ENCODE measurements at regions of chr1 and their contacts with region 1.

Region 1: DNA sequence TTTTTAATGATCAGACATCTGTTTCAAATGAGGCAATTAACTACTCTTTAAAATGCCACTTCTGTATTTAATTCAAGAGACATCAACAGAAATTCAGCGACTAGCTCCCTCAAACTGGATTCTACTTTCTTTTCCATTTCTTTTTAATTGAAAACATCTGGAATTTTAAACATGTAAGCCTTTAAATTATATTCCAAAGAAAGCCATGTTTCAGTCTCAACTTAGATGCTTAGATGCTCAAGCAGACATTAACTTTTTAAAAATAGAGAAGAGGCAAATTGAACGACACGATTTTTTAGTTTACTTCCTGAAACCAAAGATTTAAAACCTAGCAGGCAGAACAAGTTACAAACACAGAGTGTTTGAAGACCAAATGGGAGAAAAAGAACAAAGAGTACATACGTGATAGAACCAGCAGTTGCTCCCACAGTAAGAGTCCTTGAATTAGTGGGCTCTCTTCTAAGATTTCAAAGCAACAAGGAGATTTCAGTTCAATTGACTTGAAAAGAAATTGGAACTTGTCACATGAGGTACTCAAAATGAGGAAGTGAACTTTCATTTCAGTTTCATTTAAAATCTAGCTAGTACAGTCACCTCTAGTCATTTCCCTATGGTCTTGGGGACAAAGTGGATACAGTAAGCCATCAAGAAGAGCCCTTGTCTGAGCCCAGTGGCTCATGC is at the start of gene CTSS:
- DNase-seq: peak; percentile 88
- ATAC-seq: peak; percentile 90
- H3K4me3 ChIP-seq: peak within 1 kb of the TSS; percentile 77
- H3K27ac ChIP-seq: peak within 1 kb of the TSS; percentile 96
- H3K4me1 ChIP-seq: peaks cover 9% of the 10 kb centered on the region
- H3K27me3 ChIP-seq: no peaks in the 10 kb centered on the region
- CTCF ChIP-seq: no peak
- EP300 ChIP-seq: no peak; a peak in 1 of 4 replicates
- POLR2A ChIP-seq: no peak
- RAD21 ChIP-seq: no peak
- polyA plus RNA-seq, gene CTSS: 68.6 to 84.8 TPM

Region 2: DNA sequence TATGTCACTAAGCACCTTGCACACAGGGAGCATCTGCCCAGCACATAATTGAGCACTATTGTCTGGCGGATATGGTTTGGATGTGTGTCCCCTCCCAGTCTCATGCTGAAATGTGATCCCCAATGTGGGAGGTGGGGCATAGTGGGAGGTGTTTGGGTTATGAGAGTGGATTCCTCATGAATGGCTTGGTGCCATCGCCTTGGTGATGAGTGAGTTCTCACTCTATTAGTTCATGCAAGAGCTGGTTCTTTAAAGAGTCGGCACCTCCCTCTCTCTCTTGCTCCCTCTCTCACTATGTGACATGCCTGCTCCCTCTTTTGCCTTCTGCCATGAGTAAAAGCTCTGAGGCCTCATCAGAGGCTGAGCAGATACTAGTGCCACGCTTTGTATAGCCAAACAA is 33.1 kb after region 1 on chr1:
- CTCF ChIA-PET with region 1: no interaction called
- POLR2A ChIA-PET with region 1: no interaction called
- RAD21 ChIA-PET with region 1: no interaction called
- SMC1A ChIA-PET with region 1: no interaction called
- in situ Hi-C with region 1: no loop called
- intact Hi-C with region 1: no loop called
- DNase-seq: no peak
- ATAC-seq: no peak
- H3K4me3 ChIP-seq: no peak overlapping the region
- H3K27ac ChIP-seq: no peak overlapping the region
- H3K4me1 ChIP-seq: no peaks in the 10 kb centered on the region
- H3K27me3 ChIP-seq: no peaks in the 10 kb centered on the region
- CTCF ChIP-seq: no peak
- EP300 ChIP-seq: no peak
- POLR2A ChIP-seq: no peak
- RAD21 ChIP-seq: no peak

Region 3: GRCh38 chr1:150813058-150813707 is 47.7 kb after region 1 on chr1:
- CTCF ChIA-PET with region 1: interaction called, 6 read pairs
- POLR2A ChIA-PET with region 1: no interaction called
- RAD21 ChIA-PET with region 1: no interaction called
- SMC1A ChIA-PET with region 1: interaction called, 4 read pairs
- in situ Hi-C with region 1: no loop called
- intact Hi-C with region 1: loop called (anchors 5 kb)
- DNase-seq: no peak
- ATAC-seq: peak; percentile 85
- H3K4me3 ChIP-seq: no peak overlapping the region
- H3K27ac ChIP-seq: no peak overlapping the region
- H3K4me1 ChIP-seq: no peaks in the 10 kb centered on the region
- H3K27me3 ChIP-seq: no peaks in the 10 kb centered on the region
- CTCF ChIP-seq: peak; percentile 57 to 65 (median 59)
- EP300 ChIP-seq: no peak
- POLR2A ChIP-seq: no peak
- RAD21 ChIP-seq: peak; percentile 67

Region 4: DNA sequence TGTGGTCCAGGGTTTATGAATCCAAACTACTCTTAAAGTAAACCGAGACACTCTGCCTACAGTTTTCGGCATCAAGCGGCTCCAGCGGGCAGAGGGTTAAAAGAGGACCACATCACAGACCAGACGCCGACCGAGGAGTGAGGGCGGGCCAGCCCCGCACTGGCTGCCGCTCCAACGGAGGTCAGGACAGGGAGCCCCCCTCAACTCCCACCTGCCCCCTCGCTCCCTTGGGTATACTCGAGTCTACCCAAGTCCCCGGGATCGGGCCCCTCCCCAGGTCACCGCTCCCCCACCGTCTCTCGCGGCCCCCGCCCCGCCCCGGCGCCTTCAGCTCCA is 110.7 kb after region 1 on chr1:
- CTCF ChIA-PET with region 1: no interaction called
- POLR2A ChIA-PET with region 1: no interaction called
- RAD21 ChIA-PET with region 1: interaction called, 3 read pairs
- SMC1A ChIA-PET with region 1: interaction called, 3 read pairs
- in situ Hi-C with region 1: no loop called
- intact Hi-C with region 1: loop called (anchors 10 kb)
- DNase-seq: no peak
- ATAC-seq: peak; percentile 72
- H3K4me3 ChIP-seq: peak overlapping the region; percentile 79
- H3K27ac ChIP-seq: peak overlapping the region; percentile 54
- H3K4me1 ChIP-seq: peaks cover 4% of the 10 kb centered on the region; the same call in 1 of the 2 replicates
- H3K27me3 ChIP-seq: no peaks in the 10 kb centered on the region
- CTCF ChIP-seq: no peak
- EP300 ChIP-seq: no peak
- POLR2A ChIP-seq: no peak
- RAD21 ChIP-seq: no peak

Region 5: GRCh38 chr1:150979092-150980056 is 213.9 kb after region 1 on chr1:
- CTCF ChIA-PET with region 1: no interaction called
- POLR2A ChIA-PET with region 1: no interaction called
- RAD21 ChIA-PET with region 1: no interaction called
- SMC1A ChIA-PET with region 1: no interaction called
- in situ Hi-C with region 1: no loop called
- intact Hi-C with region 1: loop called (anchors 10 kb)
- DNase-seq: peak; percentile 40
- ATAC-seq: peak; percentile 78
- H3K4me3 ChIP-seq: no peak overlapping the region
- H3K27ac ChIP-seq: no peak overlapping the region
- H3K4me1 ChIP-seq: no peaks in the 10 kb centered on the region
- H3K27me3 ChIP-seq: no peaks in the 10 kb centered on the region; a peak in 2 of 4 replicates
- CTCF ChIP-seq: peak; percentile 100; a peak in 5 of 6 replicates
- EP300 ChIP-seq: no peak
- POLR2A ChIP-seq: no peak
- RAD21 ChIP-seq: peak; percentile 79

Measured in GM12878 (cell line).